ENCODE measurements at regions of chr2 and their contacts with region 1.

Region 1: DNA sequence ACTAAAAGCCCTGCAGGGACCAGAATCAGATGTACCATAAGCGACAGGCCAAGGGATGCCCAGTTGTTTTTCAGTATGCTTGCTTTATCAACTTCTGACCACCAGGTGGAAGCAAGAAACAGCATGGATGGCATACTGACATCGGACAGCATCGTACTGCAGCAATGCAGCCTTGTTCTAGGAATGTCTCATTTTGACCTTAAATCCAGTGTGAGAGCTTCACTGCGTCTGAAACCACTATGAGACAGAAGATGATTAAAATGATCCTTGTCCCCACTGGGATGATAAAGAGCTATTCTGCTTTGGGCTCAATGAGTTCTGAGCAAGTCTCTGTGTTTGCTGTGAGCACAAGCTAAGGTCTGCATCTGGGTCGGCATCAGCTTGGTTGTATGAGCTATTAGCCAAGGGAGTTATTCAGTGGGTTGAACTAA is 54.3 kb downstream of the CDK15 start:
- DNase-seq: peak; percentile 65
- H3K4me3 Mint-ChIP-seq: no peak overlapping the region
- H3K27ac Mint-ChIP-seq: no peak overlapping the region
- H3K4me1 Mint-ChIP-seq: peaks cover 28% of the 10 kb centered on the region
- H3K27me3 Mint-ChIP-seq: peaks cover 24% of the 10 kb centered on the region
- CTCF ChIP-seq: peak; percentile 87

Region 2: DNA sequence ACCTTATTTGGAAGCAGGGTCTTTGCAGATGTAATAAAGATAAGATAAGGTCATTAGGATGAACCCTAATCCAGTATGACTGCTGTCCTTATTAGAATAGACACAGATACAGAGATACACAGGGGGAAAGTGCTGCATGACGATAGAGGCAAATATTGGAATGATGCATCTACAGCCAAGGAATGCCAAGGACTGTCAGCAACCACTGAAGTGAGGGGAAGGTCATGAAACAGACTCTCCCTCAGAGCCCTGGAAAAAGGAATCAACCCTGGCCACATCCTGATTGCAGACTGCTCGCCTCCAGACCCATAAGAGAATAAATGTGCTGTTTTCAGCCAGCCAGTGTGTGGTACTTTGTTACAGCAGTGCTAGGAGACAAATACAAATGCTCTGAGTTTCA is 232.1 kb before region 1 on chr2:
- CTCF ChIA-PET with region 1: no interaction called
- intact Hi-C with region 1: no loop called
- DNase-seq: no peak
- H3K4me3 Mint-ChIP-seq: no peak overlapping the region
- H3K27ac Mint-ChIP-seq: no peak overlapping the region
- H3K4me1 Mint-ChIP-seq: no peaks in the 10 kb centered on the region
- H3K27me3 Mint-ChIP-seq: no peaks in the 10 kb centered on the region
- CTCF ChIP-seq: no peak

Region 3: DNA sequence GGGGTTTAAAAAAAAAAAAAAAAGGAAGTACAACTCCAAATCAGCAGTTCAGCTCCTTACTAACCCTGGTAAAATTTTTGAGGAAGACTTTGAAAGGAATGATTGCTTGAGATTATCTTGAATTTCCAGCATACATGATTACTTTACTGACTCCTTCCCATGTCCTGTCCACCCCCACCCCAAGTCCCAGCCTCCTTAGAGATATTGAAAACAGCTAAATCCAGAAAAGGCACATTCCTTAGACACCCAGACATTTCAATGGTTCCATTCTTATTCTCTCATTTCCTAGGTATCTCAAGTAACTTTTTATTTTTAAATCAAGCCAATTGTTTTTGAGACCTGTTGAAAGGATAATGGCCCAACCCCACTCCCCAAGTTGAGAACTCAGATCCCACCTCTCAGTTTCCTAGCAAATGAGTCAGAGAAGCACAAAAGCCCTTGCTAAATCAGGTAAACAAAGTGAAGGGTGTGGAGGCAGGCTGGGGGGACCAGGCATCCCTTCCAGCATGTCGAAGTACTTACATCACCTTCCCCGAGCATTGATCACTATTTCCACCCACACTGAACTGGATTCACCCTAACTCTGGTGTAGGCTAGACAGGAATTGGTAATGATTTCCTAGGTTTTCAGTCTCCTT is 77.6 kb after region 1 on chr2:
- CTCF ChIA-PET with region 1: no interaction called
- intact Hi-C with region 1: loop called (anchors 5 kb)
- DNase-seq: peak; percentile 60
- H3K4me3 Mint-ChIP-seq: no peak overlapping the region
- H3K27ac Mint-ChIP-seq: peak overlapping the region; percentile 54
- H3K4me1 Mint-ChIP-seq: peaks cover 30% of the 10 kb centered on the region
- H3K27me3 Mint-ChIP-seq: no peaks in the 10 kb centered on the region
- CTCF ChIP-seq: no peak

Region 4: GRCh38 chr2:202007015-202007982 is 146.6 kb after region 1 on chr2:
- CTCF ChIA-PET with region 1: interaction called, 15 read pairs
- intact Hi-C with region 1: loop called (anchors 1 kb)
- DNase-seq: no peak
- H3K4me3 Mint-ChIP-seq: no peak overlapping the region
- H3K27ac Mint-ChIP-seq: no peak overlapping the region
- H3K4me1 Mint-ChIP-seq: no peaks in the 10 kb centered on the region
- H3K27me3 Mint-ChIP-seq: peaks cover 14% of the 10 kb centered on the region
- CTCF ChIP-seq: no peak

Region 5: GRCh38 chr2:202056392-202057010 is 195.8 kb after region 1 on chr2:
- CTCF ChIA-PET with region 1: interaction called, 14 read pairs
- intact Hi-C with region 1: loop called (anchors 1 kb)
- DNase-seq: peak; percentile 27
- H3K4me3 Mint-ChIP-seq: no peak overlapping the region
- H3K27ac Mint-ChIP-seq: no peak overlapping the region
- H3K4me1 Mint-ChIP-seq: peaks cover 6% of the 10 kb centered on the region
- H3K27me3 Mint-ChIP-seq: peaks cover 20% of the 10 kb centered on the region
- CTCF ChIP-seq: peak; percentile 21

Region 6: DNA sequence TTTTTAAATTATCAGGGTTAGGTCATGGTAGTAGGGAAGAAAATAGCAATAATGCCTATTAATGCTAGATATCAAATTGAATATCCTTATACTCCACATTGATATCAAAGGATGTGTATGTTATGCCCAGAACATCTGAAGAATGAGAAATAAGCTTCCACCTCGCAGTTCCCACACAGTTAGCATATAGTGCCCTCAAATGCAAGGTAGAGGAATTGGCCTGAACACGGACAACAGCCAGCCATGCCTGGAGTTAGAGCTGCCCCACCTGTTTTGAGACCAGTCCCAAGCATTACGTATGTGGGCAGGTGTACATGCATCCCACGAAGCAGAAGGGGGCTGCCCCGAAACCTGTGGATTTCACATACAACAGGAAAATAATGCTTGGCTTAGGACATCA is 298.1 kb after region 1 on chr2:
- CTCF ChIA-PET with region 1: interaction called, 15 read pairs
- intact Hi-C with region 1: loop called (anchors 5 kb)
- DNase-seq: peak; percentile 30
- H3K4me3 Mint-ChIP-seq: no peak overlapping the region
- H3K27ac Mint-ChIP-seq: no peak overlapping the region
- H3K4me1 Mint-ChIP-seq: no peaks in the 10 kb centered on the region
- H3K27me3 Mint-ChIP-seq: no peaks in the 10 kb centered on the region
- CTCF ChIP-seq: no peak

Region 7: DNA sequence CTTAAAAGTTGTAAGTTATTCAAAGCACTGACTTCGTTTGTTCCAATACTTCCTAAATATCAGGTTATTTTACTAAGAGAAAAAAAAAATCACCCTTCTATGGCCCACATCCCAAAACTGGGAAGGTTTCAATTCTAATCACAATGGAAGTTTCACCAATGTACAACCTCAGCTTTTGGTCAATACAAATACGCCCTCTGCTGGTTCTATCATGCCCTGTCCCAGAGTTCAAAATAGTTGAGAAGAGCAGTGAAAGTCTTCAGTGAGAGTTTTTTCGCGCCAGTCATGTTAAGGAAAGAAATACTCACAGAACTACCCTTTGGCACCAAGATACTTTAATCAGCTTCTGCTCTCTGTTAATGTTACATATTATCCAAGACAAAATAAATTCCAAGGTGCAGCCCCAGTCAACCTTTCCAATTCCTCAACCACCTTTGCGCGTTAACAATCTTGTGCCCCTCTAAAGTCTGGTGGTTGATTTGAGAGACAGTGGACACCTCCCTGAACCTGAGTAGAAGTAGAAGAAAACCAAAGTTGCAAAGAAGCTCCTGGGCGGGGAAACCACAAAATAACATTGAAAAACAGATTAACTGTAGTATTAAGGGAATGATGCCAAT is 317.8 kb after region 1 on chr2:
- CTCF ChIA-PET with region 1: interaction called, 3 read pairs
- intact Hi-C with region 1: loop called (anchors 1 kb)
- DNase-seq: peak; percentile 67
- H3K4me3 Mint-ChIP-seq: no peak overlapping the region
- H3K27ac Mint-ChIP-seq: no peak overlapping the region
- H3K4me1 Mint-ChIP-seq: peaks cover 15% of the 10 kb centered on the region
- H3K27me3 Mint-ChIP-seq: no peaks in the 10 kb centered on the region
- CTCF ChIP-seq: peak; percentile 72

Measured in Calu3 (cell line).